Endothelial cell of umbilical vein (primary cell): ENCODE measurements at regions of chr2 and their contacts with region 1.

Region 1: DNA sequence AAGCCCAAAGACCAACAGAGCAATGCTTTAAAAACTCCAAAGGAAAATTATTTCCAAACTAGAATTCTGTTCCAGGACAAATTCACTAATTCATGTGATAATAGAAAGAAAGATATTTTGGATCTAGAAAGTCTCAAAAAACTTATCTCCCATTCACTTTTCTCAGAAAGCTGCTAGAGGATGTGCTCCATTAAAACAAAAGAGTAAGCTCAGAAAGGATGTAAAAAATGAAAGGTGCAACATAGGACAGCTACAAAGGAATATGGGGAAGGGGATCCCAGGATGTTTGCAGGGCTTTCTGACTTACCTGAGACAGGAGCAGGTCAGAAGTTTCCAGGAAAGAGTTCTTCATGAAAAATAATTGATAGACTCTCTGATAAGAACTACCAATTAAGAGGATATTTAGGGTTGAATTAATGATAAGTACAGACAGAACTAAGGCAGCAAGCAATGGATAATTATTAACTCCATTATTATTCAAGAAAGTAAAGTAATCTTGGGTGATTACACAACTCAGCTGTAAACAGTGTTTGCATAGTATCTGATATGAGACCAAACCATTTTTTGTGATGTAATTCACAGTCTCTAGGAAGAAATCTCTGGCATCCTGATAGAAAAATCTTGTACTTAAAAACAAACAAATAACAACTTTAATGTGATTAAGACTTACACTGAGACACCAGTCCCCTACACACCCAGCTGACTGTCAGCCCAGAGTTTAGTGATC is 20.9 kb downstream of the LYG1 start:
- DNase-seq: no peak
- H3K4me3 ChIP-seq: no peak overlapping the region
- H3K27ac ChIP-seq: no peak overlapping the region
- H3K4me1 ChIP-seq: no peaks in the 10 kb centered on the region
- H3K27me3 ChIP-seq: no peaks in the 10 kb centered on the region
- CTCF ChIP-seq: no peak
- POLR2A ChIP-seq: no peak

Region 2: GRCh38 chr2:99317166-99317872 is 37.2 kb after region 1 on chr2:
- CTCF ChIA-PET with region 1: no interaction called
- POLR2A ChIA-PET with region 1: no interaction called
- dilution Hi-C with region 1: no loop called
- intact Hi-C with region 1: loop called (anchors 1 kb)
- DNase-seq: no peak
- H3K4me3 ChIP-seq: no peak overlapping the region
- H3K27ac ChIP-seq: no peak overlapping the region
- H3K4me1 ChIP-seq: peaks cover 2% of the 10 kb centered on the region
- H3K27me3 ChIP-seq: no peaks in the 10 kb centered on the region
- CTCF ChIP-seq: no peak
- POLR2A ChIP-seq: no peak